Activated CD8-positive, alpha-beta T cell treated with anti-CD3 and anti-CD28 coated beads, Interleukin-2, amount 10 ng/mL, durations not matched to agents 7 days and 5 days (primary cell): ENCODE measurements at regions of chr18 and their contacts with region 1.

Region 1: GRCh38 chr18:2948038-2948437 is 64.9 kb downstream of the LPIN2 start:
- DNase-seq: no peak
- ATAC-seq: no peak
- H3K4me3 Mint-ChIP-seq: no peak overlapping the region
- H3K27ac Mint-ChIP-seq: no peak overlapping the region
- H3K4me1 Mint-ChIP-seq: peaks cover 30% of the 10 kb centered on the region
- H3K27me3 Mint-ChIP-seq: no peaks in the 10 kb centered on the region

Region 2: DNA sequence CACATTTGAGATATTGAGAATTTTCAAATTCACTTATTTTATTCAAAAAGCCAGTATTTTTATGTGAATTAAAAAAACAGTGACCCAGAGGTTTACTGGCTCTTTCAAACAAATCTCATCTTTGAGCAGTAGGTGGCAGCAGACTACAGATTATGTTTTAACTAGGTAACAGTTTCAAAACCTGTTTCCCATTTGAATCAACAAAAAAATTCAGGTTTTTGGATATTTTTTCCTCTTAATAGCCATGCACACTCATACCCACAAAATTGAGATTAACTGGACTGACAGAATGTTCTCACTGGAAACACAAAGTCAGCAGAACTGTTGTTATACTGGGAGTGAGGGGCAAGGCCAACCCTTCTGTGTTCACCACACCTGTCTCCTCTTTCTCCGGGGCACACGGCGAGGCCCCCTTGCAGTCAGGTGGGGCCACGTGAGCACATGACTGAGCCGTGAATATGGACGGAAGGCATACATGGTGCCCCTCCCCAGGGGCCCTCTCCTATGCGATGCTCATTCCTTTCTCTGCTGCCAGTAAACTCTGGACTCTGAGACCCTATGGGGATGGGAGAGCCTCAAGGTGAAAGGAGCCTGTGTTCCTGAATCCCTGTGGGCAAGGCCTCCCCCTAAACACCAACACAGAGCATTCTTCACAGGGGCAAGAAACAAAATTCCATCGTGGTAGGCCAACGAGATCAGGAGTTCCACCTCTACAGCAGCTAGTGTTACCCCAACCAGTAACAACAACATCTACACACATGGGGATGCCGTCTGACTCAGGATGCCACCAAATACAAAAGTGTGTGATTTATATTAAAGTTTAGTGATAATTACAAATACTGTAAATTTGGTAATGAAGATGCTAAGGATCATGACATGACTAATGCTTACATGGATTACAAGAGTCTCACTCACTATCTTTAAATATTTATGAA is 15.5 kb before region 1 on chr18:
- CTCF ChIA-PET with region 1: interaction called, 14 read pairs
- POLR2A ChIA-PET with region 1: no interaction called
- DNase-seq: peak; percentile 75
- ATAC-seq: peak; percentile 73
- H3K4me3 Mint-ChIP-seq: no peak overlapping the region
- H3K27ac Mint-ChIP-seq: peak overlapping the region; percentile 67
- H3K4me1 Mint-ChIP-seq: peaks cover 26% of the 10 kb centered on the region
- H3K27me3 Mint-ChIP-seq: no peaks in the 10 kb centered on the region